Activated naive CD4-positive, alpha-beta T cell treated with anti-CD3 and anti-CD28 coated beads for 36 hours (primary cell): ENCODE measurements at regions of chr9 and their contacts with region 1.

Region 1: GRCh38 chr9:129712634-129713401 is 40.0 kb downstream of the PTGES start:
- DNase-seq: no peak
- H3K4me3 Mint-ChIP-seq: no peak overlapping the region
- H3K27ac Mint-ChIP-seq: no peak overlapping the region
- H3K4me1 Mint-ChIP-seq: peaks cover 19% of the 10 kb centered on the region
- H3K27me3 Mint-ChIP-seq: no peaks in the 10 kb centered on the region

Region 2: GRCh38 chr9:129671519-129671918 is 41.3 kb before region 1 on chr9:
- CTCF ChIA-PET with region 1: no interaction called
- intact Hi-C with region 1: loop called (anchors 5 kb)
- DNase-seq: no peak
- H3K4me3 Mint-ChIP-seq: no peak overlapping the region
- H3K27ac Mint-ChIP-seq: no peak overlapping the region
- H3K4me1 Mint-ChIP-seq: no peaks in the 10 kb centered on the region
- H3K27me3 Mint-ChIP-seq: peaks cover 8% of the 10 kb centered on the region

Region 3: GRCh38 chr9:129796029-129796910 is 83.5 kb after region 1 on chr9:
- CTCF ChIA-PET with region 1: no interaction called
- intact Hi-C with region 1: no loop called
- DNase-seq: no peak
- H3K4me3 Mint-ChIP-seq: no peak overlapping the region
- H3K27ac Mint-ChIP-seq: no peak overlapping the region
- H3K4me1 Mint-ChIP-seq: no peaks in the 10 kb centered on the region
- H3K27me3 Mint-ChIP-seq: no peaks in the 10 kb centered on the region